ENCODE measurements at regions of chr17 and their contacts with region 1.

Region 1: DNA sequence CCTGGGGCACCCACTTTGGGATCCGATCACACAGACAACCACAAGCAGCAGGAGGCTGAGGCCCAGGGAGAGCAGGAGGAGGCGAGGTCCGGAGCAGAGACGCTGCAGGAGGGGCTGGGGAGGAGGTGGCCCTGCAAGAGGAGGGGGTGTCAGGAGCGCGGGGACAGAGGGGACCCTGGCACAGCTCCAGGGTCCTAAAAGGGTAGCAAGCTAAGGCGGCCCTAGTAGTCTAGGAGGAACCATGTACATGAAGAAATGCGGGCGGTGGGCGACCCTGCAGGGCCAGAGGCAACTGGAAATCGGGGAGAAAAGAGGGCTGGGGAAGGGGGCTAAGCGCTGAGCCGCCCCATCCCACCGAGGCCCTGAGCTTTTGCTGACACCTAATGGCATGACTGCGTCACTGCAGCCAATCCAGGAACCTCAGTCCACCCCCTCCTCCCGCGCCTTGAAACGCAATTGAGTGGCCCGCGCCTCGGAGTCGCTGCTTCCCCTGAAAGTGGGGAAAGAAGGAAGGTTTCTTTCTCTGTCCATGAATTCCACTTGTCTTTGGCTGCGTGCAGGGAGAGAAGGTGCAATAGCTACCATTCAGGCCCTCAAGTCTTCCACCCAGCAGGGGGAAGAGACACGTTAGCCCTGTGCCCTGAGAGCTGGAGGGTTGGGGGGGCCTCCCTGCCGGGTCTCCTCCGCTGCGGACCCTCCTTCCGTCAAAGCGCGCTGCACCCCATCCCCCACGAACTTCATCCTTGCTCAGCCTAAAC is 1.8 kb downstream of the ASGR1 start:
- DNase-seq: peak; percentile 89

Region 2: DNA sequence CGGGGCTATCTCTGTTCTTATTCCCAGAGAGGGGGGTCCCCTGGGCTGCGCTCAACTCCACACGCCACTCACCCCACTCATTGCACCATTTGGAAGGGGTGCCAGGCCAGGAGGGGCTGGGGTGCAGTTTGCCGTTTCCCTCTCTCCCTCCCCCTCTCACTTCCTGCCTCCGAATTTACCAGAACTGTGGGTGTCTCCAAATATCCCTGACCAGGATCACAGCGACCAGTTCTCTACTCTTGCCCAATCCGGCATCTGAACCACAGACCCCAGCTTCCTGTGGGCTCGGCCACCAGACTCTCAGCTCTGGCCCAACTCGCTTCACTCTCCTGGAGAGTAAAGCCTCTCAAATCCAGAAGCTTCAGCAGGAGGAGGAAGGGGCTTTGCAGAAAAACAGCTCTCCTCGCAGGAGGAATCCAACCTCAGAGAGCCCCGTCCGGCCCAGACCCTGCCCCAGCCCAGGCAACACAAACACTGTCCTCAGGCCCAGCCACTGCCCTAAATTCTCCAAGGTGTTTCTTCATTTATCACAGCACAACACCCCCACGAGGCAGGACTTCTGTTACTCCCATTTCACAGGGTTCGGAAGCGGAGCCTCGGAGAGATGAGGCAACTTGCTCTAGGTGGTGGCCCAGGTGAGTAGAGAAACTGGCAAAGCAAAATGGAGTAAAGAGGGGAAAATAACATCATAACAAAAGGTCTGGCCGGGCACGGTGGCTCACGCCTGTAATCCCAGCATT is 62.3 kb before region 1 on chr17:
- CTCF ChIA-PET with region 1: no interaction called
- POLR2A ChIA-PET with region 1: no interaction called
- DNase-seq: no peak

Region 3: DNA sequence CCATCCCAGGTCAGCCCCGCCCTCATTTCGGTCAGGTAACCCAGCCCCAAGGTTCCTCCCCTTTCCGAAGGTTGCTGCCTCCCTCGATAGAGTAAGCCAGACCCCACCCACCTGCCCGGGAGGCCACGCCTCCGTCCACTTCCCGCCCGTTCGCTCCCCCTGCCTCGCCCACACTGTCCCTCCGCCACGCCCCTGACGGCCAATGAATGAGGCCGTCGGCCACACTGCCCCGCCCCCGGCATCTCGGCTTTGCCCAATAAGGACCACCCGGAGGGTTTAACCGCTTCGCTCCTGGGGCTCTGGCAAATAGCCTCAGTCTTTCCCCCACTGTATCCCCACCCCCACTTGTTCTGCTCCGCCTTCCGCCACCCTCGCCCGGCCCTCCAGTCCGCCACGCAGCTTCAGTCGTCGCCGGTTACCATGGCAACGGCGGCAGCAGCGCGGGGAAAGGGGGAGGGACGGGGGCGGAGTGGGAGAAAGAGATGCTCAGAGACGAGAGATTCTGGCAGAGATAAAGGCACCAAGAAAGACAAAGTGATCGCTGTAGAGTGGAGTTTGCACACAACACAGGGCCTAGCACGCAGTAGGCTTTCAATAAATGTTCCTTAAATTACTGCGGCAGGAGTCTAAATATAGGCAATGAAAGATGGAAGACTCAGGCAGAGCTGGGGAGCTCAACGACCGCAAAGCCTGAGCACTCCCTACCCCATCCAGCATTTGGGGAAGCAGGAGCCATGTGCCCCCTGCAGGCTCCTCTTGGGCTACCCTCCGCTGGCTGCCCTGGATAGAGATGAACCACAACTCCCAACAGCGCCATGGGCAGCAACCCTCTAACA is 37.1 kb after region 1 on chr17:
- CTCF ChIA-PET with region 1: interaction called, 4 read pairs
- POLR2A ChIA-PET with region 1: interaction called, 11 read pairs
- DNase-seq: peak; percentile 96

Measured in HEK293T (cell line).